A549 (cell line): ENCODE measurements at regions of chr9 and their contacts with region 1.

Region 1: DNA sequence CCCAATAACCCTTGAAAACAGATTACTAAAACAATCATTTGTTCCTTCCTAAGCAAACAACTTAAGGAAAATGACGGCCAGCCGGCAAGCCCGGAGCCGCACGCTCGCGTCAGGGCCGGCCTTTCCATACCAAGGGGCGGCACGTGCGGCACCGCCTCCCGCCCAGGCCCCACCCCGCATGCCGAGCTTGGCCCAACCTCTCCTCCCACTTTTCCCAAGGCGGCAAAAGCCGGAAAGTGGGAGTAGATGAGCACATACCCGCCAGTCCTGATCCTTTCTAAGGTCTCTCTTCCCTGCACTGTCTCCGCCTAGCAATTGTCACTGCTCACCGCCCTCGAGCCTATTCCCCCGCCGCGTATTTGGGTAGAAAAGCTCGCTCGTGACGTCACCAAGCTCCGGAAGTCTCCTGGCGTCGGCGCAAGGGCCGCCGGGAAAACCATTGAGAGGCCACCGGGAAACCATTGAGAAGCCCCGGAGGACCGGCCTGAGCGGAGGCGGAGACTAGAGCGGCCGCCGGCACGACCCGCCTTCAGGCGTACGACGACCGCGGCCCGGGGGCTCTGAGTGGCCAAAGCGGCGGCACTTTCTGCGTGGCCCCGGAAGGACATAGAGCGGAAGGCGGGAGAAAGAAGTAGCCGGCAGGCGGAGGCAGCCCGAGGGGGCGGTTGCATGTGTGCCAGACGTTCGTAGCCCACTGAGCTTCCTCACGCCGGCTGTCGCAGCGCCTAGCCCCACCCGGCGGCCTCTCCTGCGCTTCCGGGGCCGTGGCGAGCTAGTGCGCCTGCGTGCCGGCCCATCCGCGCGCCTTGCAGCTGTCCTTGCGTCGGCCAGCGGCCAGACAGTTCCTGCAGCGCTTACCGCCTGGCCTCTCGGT is at the starts of genes NCBP1 and TSTD2:
- DNase-seq: peak; percentile 91 to 98
- ATAC-seq: peak; percentile 91 to 97
- H3K4me3 ChIP-seq: peak within 1 kb of the TSS; percentile 96
- H3K27ac ChIP-seq: peak within 1 kb of the TSS; percentile 93 to 96
- H3K4me1 ChIP-seq: peaks cover 38% of the 10 kb centered on the region
- CTCF ChIP-seq: no peak
- EP300 ChIP-seq: no peak
- POLR2A ChIP-seq: peak; percentile 96
- RAD21 ChIP-seq: no peak
- polyA plus RNA-seq, gene NCBP1: 43.4 and 48.2 TPM in 2 replicates
- polyA plus RNA-seq, gene TSTD2: 33.3 and 37.4 TPM in 2 replicates

Region 2: GRCh38 chr9:97645720-97646119 is 12.5 kb after region 1 on chr9:
- CTCF ChIA-PET with region 1: interaction called, 8 read pairs
- POLR2A ChIA-PET with region 1: interaction called, 22 read pairs
- DNase-seq: no peak
- ATAC-seq: no peak
- H3K4me3 ChIP-seq: no peak overlapping the region
- H3K27ac ChIP-seq: no peak overlapping the region
- H3K4me1 ChIP-seq: no peaks in the 10 kb centered on the region
- CTCF ChIP-seq: no peak
- EP300 ChIP-seq: no peak
- POLR2A ChIP-seq: no peak
- RAD21 ChIP-seq: no peak

Region 3: GRCh38 chr9:97768736-97769135 is 135.5 kb after region 1 on chr9:
- CTCF ChIA-PET with region 1: no interaction called
- POLR2A ChIA-PET with region 1: no interaction called
- DNase-seq: no peak
- ATAC-seq: no peak
- H3K4me3 ChIP-seq: no peak overlapping the region
- H3K27ac ChIP-seq: no peak overlapping the region
- H3K4me1 ChIP-seq: no peaks in the 10 kb centered on the region
- CTCF ChIP-seq: no peak
- EP300 ChIP-seq: no peak
- POLR2A ChIP-seq: no peak
- RAD21 ChIP-seq: no peak